Sciatic nerve (tissue), 2 donors: ENCODE measurements at regions of chr4 and their contacts with region 1.

Region 1: DNA sequence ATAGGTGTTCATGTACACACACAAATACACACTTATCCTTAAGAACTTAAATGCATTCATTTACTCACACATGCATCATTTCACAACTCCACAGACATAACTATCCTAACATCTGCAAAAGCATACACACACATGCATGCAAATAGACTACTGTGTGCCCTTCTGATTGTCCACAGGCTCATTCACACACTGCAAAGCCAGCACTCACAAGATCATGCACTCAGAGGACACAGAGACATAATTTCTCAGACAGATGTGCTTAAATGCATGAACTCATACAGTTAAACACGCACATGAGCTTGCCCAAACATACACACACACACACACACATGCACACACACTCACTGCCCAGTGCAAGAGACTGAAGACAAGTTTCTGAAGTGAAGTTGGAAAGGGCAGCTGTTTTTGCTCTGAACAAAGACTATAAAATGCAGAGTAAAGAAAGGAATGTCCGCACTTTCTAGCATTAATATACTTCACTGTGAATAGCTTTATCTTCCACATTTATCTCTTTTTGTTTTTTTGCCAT is 1018.0 kb upstream of the HS3ST1 start:
- DNase-seq: no peak
- ATAC-seq: no peak

Region 2: DNA sequence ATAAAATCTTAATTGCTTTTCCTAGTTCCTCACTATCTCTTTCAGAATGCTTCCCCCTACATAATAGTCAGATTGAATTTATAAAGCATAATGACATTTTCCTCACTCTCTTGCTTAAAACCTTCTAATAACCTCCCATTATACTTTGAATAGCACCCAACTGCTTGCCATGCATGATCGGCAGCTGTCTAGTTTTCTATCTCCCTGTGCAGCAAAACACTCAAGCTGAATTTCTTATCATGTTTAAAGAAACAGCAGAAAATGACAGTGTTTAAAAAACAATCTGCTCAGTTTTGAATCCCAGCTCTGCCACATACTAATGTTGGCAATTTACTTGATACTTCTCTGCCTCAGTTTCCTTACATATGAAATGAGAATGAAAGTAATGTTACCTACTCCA is 70.9 kb before region 1 on chr4:
- intact Hi-C with region 1: no loop called
- DNase-seq: no peak
- ATAC-seq: no peak

Region 3: GRCh38 chr4:12399781-12400180 is 46.9 kb before region 1 on chr4:
- intact Hi-C with region 1: loop called (anchors 1 kb)
- DNase-seq: no peak
- ATAC-seq: no peak

Region 4: GRCh38 chr4:12458621-12459020 is 11.9 kb after region 1 on chr4:
- intact Hi-C with region 1: loop called (anchors 1 kb)
- DNase-seq: no peak
- ATAC-seq: no peak